Panc1 (cell line): ENCODE measurements at regions of chr5 and their contacts with region 1.

Region 1: GRCh38 chr5:66454186-66455078 is 141.8 kb upstream of the MAST4 start:
- DNase-seq: no peak
- ATAC-seq: no peak
- H3K4me3 ChIP-seq: no peak overlapping the region
- H3K27ac ChIP-seq: no peak overlapping the region
- H3K4me1 ChIP-seq: no peaks in the 10 kb centered on the region
- H3K27me3 ChIP-seq: no peaks in the 10 kb centered on the region
- CTCF ChIP-seq: no peak

Region 2: DNA sequence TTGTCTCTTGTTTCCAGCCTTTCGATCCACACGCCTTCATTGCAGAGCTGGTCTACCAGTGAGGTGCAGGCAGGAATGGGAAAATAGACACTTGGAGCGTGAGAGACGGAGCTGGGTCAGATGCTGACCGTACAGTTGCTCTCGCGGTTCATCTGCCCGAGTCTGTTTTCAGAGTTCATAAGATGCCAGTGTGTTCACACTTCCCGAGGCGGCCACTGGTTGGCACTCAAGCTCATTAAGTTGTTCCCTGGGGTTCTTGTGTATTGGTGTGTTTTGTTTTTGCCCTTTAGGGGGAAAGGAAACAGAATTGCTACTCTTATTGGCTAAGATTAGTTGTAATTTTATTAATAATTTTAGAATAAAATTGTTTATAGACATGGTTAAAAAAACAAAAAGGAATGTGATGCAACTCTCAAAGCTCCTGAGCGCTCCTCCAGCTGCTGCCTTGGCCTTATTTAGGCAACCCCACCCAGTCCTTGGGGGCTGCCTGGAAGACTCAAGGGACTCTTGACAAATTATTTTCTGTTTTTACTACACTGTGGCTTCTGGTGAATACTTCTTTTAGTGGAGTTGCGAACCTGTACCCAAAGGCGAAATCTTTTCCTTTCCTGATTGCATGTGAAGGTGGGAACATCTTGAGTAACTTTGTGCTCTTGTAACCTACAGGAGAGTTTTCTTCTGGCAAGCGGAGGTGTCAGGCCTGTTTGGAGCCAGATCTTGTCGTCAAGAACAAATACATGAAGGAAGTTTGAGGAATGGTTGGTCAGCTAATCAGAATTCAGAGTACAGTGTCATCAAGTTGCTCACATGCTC is 287.9 kb after region 1 on chr5:
- CTCF ChIA-PET with region 1: no interaction called
- POLR2A ChIA-PET with region 1: interaction called, 12 read pairs
- in situ Hi-C with region 1: no loop called
- intact Hi-C with region 1: no loop called
- DNase-seq: no peak
- ATAC-seq: peak; percentile 72; the same call in 1 of the 2 replicates
- H3K4me3 ChIP-seq: no peak overlapping the region
- H3K27ac ChIP-seq: no peak overlapping the region
- H3K4me1 ChIP-seq: no peaks in the 10 kb centered on the region
- H3K27me3 ChIP-seq: peaks cover 5% of the 10 kb centered on the region; the same call in 1 of the 2 replicates
- CTCF ChIP-seq: peak; percentile 62